B cell (primary cell): ENCODE measurements at regions of chr19 and their contacts with region 1.

Region 1: DNA sequence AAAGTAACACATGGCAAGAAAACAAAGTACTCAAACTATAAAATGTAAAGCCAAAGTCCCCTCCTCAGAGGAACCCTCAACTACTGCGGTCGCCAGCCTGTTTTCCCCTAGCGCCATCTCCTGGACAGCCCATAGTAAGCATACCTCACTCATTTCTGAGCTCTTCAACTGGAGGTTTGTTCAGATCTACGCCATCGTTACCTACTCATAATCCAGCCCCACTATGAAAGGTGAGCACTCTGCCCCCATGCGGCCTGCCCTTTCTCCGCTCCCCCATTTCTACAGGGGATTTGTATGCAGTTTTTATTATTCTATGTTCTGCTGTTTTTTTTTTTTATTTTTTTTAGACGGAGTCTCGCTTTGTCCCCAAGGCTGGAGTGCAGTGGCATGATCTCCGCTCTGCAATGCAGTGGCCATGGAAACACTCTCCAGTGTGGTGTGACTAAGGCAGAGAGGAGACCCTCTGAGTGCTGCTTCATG is 26.2 kb downstream of the OPA3 start:
- DNase-seq: peak; percentile 84
- ATAC-seq: peak; percentile 98
- H3K4me3 ChIP-seq: no peak overlapping the region
- H3K4me3 Mint-ChIP-seq: no peak overlapping the region
- H3K27ac ChIP-seq: peak overlapping the region in 1 of 2 donors; percentile 30
- H3K27ac Mint-ChIP-seq: peak overlapping the region; percentile 8
- H3K4me1 ChIP-seq: peaks cover 3 to 31% of the 10 kb centered on the region in 2 donors
- H3K4me1 Mint-ChIP-seq: peaks cover 23% of the 10 kb centered on the region
- H3K27me3 ChIP-seq: no peaks in the 10 kb centered on the region
- H3K27me3 Mint-ChIP-seq: no peaks in the 10 kb centered on the region
- CTCF ChIP-seq: peak; percentile 85

Region 2: DNA sequence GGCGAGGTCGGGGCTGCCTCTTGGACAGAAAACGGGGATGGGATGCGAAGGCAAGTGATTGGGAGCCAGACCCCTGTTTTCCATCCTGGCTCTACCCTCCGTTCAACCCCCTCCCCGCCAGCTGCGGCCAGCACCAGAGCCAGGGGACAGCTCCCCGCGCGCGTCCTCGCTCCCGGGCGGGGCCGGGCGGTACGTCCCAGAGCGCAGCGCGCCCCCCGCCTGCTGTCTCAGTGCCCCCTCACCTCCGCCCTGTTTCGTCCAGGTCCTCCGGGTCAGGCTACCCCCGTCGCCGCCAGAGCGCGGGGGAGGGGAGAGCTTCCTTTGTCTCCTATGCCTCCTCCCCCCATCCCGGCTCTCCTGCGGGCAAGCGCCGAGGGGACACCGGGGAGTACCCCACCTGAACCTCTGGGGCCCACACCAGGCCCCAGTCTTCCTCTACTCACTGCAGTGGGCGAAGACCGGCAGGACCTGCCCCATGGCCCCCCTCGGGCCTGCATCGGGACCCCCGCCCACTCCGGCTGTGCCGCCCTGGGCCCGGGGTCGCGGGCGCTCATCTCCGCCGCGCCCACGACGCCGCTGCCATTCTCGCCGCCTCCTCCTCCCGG is 62.0 kb before region 1 on chr19:
- CTCF ChIA-PET with region 1: interaction called, 18 read pairs
- POLR2A ChIA-PET with region 1: no interaction called
- intact Hi-C with region 1: loop called (anchors 2 kb)
- DNase-seq: peak; percentile 66
- ATAC-seq: peak; percentile 6
- H3K4me3 ChIP-seq: peak overlapping the region in 4 of 5 experiments; percentile 52 to 64 (median 60)
- H3K4me3 Mint-ChIP-seq: peak overlapping the region; percentile 73
- H3K27ac ChIP-seq: no peak overlapping the region
- H3K27ac Mint-ChIP-seq: no peak overlapping the region
- H3K4me1 ChIP-seq: peaks cover 43 to 51% of the 10 kb centered on the region in 2 donors
- H3K4me1 Mint-ChIP-seq: peaks cover 45% of the 10 kb centered on the region
- H3K27me3 ChIP-seq: peaks cover 0 to 49% (median 24%) of the 10 kb centered on the region in 4 experiments
- H3K27me3 Mint-ChIP-seq: peaks cover 21% of the 10 kb centered on the region
- CTCF ChIP-seq: no peak

Region 3: DNA sequence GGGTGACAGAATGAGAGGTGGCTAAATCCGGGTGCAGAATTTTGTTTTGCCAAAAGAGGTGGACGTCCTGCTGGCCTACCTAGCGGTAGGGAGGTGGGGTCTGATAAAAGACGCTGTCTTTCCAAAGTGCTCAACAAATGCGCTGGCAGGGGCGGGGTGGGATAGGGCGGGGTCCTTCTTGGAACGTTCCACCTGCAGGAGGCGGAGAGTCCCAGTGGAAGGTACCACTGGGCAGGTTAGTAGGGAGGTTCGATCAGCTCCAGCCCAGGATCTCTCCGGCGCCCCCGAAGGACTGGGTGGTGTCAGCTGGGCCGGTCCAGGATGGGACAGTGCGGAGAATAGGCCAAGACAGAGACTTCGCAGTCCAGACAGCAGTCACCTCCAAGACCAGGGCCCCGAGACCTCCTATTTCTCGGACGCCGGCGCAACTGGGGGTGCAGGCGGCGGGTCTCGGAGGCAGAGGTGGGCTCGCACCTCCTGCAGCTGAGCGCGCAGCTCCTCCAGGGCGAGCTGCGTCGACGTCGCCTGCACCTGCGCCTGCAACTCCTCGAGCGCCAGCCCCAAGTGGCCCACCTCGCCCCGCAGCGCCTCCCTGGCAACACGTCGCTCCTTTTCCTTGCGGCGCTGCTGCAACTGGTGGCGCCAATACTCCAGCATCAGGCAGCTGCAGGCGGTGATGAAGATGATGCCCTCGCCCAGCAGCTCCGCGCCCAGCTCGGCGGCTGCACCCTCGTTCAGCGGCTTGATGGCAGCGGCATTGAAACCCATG is 29.6 kb before region 1 on chr19:
- CTCF ChIA-PET with region 1: interaction called, 16 read pairs
- POLR2A ChIA-PET with region 1: interaction called, 3 read pairs
- intact Hi-C with region 1: no loop called
- DNase-seq: peak; percentile 35
- ATAC-seq: peak; percentile 45
- H3K4me3 ChIP-seq: peak overlapping the region in 2 of 5 experiments; percentile 12 to 29
- H3K4me3 Mint-ChIP-seq: peak overlapping the region; percentile 64
- H3K27ac ChIP-seq: no peak overlapping the region
- H3K27ac Mint-ChIP-seq: peak overlapping the region; percentile 53
- H3K4me1 ChIP-seq: peaks cover 9 to 19% of the 10 kb centered on the region in 2 donors
- H3K4me1 Mint-ChIP-seq: peaks cover 21% of the 10 kb centered on the region
- H3K27me3 ChIP-seq: peaks cover 0 to 3% (median 0%) of the 10 kb centered on the region in 4 experiments
- H3K27me3 Mint-ChIP-seq: no peaks in the 10 kb centered on the region
- CTCF ChIP-seq: no peak

Region 4: GRCh38 chr19:45547976-45548609 is 10.3 kb before region 1 on chr19:
- CTCF ChIA-PET with region 1: interaction called, 13 read pairs
- POLR2A ChIA-PET with region 1: no interaction called
- intact Hi-C with region 1: no loop called
- DNase-seq: no peak
- ATAC-seq: no peak
- H3K4me3 ChIP-seq: no peak overlapping the region
- H3K4me3 Mint-ChIP-seq: no peak overlapping the region
- H3K27ac ChIP-seq: no peak overlapping the region
- H3K27ac Mint-ChIP-seq: no peak overlapping the region
- H3K4me1 ChIP-seq: peaks cover 7 to 20% of the 10 kb centered on the region in 2 donors
- H3K4me1 Mint-ChIP-seq: peaks cover 21% of the 10 kb centered on the region
- H3K27me3 ChIP-seq: no peaks in the 10 kb centered on the region
- H3K27me3 Mint-ChIP-seq: no peaks in the 10 kb centered on the region
- CTCF ChIP-seq: no peak